ENCODE measurements at regions of chr14 and their contacts with region 1.

Region 1: GRCh38 chr14:22646570-22647254 is 2.6 kb upstream of the OR6J1 start:
- DNase-seq: no peak
- CTCF ChIP-seq: no peak

Region 2: GRCh38 chr14:22131749-22132476 is 514.8 kb before region 1 on chr14:
- in situ Hi-C with region 1: no loop called
- DNase-seq: no peak
- CTCF ChIP-seq: no peak

Region 3: GRCh38 chr14:22333422-22334276 is 313.1 kb before region 1 on chr14:
- in situ Hi-C with region 1: no loop called
- DNase-seq: no peak
- CTCF ChIP-seq: no peak

Region 4: DNA sequence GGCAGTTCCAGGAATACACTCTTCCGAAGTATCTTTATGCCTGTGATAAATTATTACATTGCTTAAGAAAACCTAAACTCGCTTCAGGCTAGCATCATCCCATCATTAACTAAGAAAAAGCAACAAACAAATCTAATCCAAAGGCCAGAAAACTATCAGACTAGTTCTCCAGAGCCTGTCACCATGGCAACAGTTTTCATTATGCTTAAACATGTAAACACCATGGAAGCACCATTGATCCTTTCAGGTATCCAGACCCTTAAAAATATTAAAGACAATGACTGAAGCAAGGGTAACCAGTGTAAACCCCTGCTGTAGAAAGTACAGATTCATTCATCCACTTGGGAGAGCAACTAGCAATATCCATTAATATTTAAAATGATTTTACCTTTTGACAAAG is 67.5 kb before region 1 on chr14:
- in situ Hi-C with region 1: loop called (anchors 5 kb)
- DNase-seq: no peak
- CTCF ChIP-seq: no peak

Measured in GM13976 (cell line).